Activated CD4-positive, alpha-beta T cell treated with anti-CD3 and anti-CD28 coated beads for 36 hours (primary cell): ENCODE measurements at regions of chr2 and their contacts with region 1.

Region 1: DNA sequence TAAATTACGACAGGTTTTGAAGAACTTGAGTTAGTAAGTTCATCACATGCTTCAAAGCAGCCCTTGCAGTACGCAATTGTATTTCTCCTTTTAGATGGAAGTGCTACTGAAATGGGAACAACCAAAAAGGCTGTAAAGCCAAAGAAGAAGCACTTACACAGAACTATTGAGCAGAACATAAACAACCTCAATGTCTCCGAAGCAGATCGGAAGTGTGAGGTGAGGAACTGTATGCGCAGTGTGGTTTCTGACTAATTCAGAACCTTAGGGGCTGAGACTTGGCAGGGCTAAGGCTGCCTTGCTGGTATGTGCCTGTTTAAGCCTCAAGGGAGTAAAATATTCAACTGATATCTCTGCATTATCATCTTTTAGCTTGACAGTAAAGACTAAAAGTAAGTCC is 8.4 kb downstream of the NCAPH start:
- DNase-seq: peak; percentile 56
- ATAC-seq: peak; percentile 74
- H3K4me3 Mint-ChIP-seq: no peak overlapping the region
- H3K27ac Mint-ChIP-seq: peak overlapping the region; percentile 55
- H3K4me1 Mint-ChIP-seq: peaks cover 46% of the 10 kb centered on the region
- H3K27me3 Mint-ChIP-seq: no peaks in the 10 kb centered on the region

Region 2: DNA sequence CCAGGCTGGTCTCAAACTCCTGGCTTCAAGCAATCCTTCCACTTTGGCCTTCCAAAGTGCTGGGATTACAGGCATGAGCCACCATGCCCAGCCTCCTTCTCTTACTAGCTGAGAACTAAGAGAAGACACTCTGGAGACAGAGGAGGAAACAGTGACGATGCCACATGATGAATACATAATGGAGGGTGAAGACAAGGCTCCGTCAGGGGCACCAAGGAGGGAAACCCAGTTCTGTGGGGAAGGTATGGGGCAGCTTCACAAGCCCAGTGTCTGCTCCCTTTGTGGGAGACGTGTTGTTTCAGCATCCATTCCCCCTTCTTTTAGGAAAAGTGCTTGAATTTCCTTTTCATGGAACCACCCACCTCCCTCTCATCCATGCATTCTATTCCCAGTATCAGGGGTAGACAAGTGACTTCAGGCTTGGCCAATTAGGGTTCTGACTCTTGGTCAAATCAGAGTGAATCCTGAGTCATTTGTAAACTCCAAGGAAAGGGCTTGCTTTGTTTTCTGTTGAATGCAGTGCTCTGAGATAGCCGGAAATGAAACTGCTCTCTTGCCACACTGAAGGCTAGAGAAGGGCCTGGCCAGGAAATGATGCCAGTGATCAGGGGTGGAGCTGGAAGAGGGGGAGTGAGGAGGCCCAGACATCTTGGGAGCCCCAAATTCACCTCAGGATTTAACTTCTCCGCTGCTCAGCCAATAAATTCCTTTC is 102.0 kb before region 1 on chr2:
- CTCF ChIA-PET with region 1: no interaction called
- POLR2A ChIA-PET with region 1: no interaction called
- intact Hi-C with region 1: loop called in 1 of 2 experiments (anchors 1 kb)
- DNase-seq: peak; percentile 78
- ATAC-seq: peak; percentile 94
- H3K4me3 Mint-ChIP-seq: peak overlapping the region; percentile 13
- H3K27ac Mint-ChIP-seq: peak overlapping the region; percentile 91
- H3K4me1 Mint-ChIP-seq: peaks cover 45% of the 10 kb centered on the region
- H3K27me3 Mint-ChIP-seq: no peaks in the 10 kb centered on the region

Region 3: DNA sequence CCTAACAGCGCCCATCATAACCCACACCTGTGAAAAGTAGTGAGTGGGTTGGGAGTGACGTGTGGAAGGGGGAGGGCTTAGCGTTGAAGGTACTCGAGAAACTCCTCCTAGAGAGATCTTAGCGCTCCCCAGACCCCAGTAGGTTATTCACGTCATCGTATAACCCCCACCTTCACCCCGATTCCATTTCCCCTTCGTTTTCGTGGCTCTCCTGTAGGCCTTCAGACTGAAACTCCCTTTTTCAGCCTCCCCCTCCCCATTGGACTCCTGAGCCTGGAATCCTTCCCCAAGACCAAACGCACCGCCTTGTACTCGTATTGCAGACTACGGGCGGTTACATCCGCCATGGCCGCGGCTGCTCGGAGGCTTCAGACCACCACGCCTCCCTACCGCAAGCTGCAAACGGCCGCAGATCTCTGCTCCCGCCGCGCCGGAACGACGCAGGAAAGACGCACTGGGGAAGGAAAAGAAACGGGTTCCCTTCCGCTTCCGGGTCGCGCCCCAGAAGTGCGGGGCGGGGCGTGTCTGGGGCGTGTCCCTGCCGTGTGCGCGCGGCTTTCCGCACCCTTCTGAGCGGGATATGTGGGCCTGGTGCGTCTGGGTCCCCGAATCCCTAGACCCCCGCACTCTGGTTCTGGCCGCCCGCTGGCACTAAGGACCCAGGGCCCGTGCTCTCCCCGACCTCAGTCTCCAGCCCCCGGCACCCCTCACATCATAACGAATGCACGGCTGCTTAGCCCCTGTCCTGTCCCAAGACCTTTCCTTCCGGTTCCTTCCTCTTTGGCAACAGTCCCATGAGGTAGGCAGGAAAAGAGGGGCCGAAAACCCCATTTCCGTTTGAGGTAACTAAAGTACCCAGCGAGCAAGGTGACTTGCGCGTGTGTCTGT is 38.7 kb before region 1 on chr2 and contains the start of gene SNRNP200:
- CTCF ChIA-PET with region 1: interaction called, 3 read pairs
- POLR2A ChIA-PET with region 1: interaction called, 7 read pairs
- intact Hi-C with region 1: loop called in 1 of 2 experiments (anchors 1 kb)
- DNase-seq: peak; percentile 96
- ATAC-seq: peak; percentile 97
- H3K4me3 Mint-ChIP-seq: peak within 1 kb of the TSS; percentile 100
- H3K27ac Mint-ChIP-seq: peak within 1 kb of the TSS; percentile 99
- H3K4me1 Mint-ChIP-seq: peaks cover 46% of the 10 kb centered on the region
- H3K27me3 Mint-ChIP-seq: no peaks in the 10 kb centered on the region
- total RNA-seq, gene SNRNP200: 176 to 198 TPM

Region 4: DNA sequence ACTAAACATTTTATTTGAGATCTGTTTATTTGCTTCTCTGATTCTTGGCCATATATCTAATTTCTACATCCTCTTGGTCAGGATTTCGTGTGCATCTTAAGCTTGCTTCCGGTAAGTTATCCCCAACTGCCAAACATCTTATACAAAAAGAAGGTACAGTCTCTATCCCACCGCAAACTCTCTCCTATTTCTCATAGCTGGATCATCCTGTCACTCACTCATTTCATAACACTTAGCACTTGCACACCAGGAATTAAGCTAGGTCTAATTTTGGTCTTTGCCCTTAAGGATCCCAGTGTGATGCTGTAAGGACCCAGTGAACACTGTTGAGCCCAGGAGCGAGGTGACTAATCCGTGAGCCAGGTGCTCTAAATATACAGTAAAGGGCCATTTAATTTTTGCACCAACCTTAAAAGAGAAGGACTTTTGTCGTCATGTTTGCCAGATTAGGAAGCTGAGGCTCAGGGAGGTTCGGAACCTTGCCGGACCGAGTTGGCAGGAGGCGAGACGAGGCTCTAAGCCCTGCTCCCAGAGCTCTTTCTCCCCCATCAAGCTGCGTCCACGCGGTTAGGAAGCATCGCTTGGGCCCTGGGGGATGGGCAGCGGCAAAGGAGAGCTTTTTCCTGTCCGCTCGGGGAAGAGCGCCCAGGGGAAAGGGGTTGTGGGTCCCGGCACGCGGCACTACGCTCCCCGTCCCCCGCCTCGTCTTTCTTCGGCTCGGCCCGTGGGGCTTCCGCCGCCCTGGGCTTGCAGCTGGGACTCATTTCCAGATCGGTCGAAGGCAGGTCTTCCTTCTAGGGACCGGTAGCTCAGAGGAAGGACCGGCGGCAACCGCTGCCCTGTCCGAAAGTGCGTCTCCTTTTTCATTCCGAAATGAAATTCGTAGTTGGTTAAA is 23.0 kb before region 1 on chr2:
- CTCF ChIA-PET with region 1: interaction called, 4 read pairs
- POLR2A ChIA-PET with region 1: interaction called, 3 read pairs
- intact Hi-C with region 1: loop called in 1 of 2 experiments (anchors 2 kb)
- DNase-seq: peak; percentile 54
- ATAC-seq: peak; percentile 10
- H3K4me3 Mint-ChIP-seq: peak overlapping the region; percentile 73
- H3K27ac Mint-ChIP-seq: peak overlapping the region; percentile 63
- H3K4me1 Mint-ChIP-seq: peaks cover 52% of the 10 kb centered on the region
- H3K27me3 Mint-ChIP-seq: peaks cover 10% of the 10 kb centered on the region

Region 5: DNA sequence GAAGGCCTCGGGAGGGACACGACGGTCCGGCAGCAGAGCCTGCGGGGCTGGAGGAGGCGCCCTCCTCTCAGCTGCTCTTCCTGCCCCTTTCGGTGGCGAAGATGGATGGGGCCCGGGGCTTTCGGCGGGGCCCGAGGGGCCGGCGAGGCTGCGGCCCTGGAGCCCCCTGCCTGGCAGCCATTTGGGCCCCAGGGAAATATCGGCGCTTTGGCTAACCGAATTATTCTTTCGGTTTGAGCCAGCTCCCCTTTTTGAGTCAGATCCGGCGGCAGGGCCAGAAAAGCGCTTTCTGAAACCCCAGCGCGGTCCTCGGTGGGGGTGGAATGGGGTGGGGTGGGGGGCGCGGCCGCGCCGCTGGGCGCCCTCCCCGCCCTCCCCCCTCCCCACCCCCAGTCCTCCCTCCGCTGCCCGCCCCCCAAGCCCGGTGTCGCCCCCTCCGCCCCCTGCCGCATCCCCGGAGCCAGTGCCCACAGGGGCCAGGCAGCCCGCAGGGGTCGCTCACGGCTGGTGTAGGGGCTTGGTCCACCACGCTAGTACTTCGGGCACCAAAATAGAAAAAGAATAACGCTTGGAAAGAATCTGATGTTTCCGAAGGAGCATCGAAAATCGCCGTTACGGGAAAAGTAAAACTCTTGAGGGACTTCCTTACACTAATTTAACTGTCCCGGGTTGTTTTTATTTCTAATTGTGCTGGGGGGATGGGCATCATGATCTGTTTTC is 183.4 kb after region 1 on chr2:
- CTCF ChIA-PET with region 1: no interaction called
- POLR2A ChIA-PET with region 1: no interaction called
- intact Hi-C with region 1: loop called in 1 of 2 experiments (anchors 5 kb)
- DNase-seq: peak; percentile 87
- ATAC-seq: no peak
- H3K4me3 Mint-ChIP-seq: peak overlapping the region; percentile 76
- H3K27ac Mint-ChIP-seq: peak overlapping the region; percentile 98
- H3K4me1 Mint-ChIP-seq: peaks cover 88% of the 10 kb centered on the region
- H3K27me3 Mint-ChIP-seq: peaks cover 2% of the 10 kb centered on the region